B cell (primary cell): ENCODE measurements at regions of chr12 and their contacts with region 1.

Region 1: DNA sequence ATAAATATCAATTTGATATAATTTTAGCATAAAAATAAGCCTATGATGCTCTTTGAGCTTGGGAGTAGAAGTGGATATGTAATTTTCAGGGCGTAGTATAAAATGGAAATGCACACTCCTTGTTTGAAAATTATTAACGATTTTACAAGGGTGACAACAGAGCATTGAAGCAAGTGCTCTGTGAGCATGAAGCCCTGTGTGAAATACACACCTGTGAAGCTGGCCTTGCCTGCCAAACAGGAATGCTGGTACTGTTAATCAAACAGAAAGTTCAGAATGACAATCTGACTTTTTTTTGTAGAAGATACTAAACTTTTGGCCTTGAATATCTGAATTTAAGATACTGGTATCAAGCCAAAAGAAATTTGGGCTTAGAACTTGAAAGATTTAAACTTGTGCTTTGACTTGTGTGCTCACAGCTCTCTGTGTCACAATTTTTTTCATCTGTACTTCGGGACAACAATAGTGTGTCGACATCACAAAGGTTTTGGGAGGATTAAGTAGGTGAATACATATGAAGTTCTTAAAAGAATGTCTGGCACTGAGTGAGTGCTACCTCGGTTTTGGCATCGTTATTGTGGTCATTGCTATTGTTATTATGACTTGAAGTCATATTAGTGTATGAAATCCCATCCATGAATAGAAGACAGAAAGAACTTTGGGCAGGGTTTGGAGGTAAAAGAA is 47.3 kb downstream of the LRRK2 start:
- DNase-seq: no peak
- ATAC-seq: no peak
- H3K4me3 ChIP-seq: no peak overlapping the region
- H3K4me3 Mint-ChIP-seq: no peak overlapping the region
- H3K27ac ChIP-seq: no peak overlapping the region
- H3K27ac Mint-ChIP-seq: no peak overlapping the region
- H3K4me1 ChIP-seq: no peaks in the 10 kb centered on the region
- H3K4me1 Mint-ChIP-seq: peaks cover 2% of the 10 kb centered on the region
- H3K27me3 ChIP-seq: no peaks in the 10 kb centered on the region
- H3K27me3 Mint-ChIP-seq: no peaks in the 10 kb centered on the region
- CTCF ChIP-seq: no peak

Region 2: GRCh38 chr12:40248585-40249297 is 23.4 kb before region 1 on chr12:
- CTCF ChIA-PET with region 1: no interaction called
- POLR2A ChIA-PET with region 1: no interaction called
- intact Hi-C with region 1: no loop called
- DNase-seq: peak; percentile 40
- ATAC-seq: peak; percentile 54
- H3K4me3 ChIP-seq: peak overlapping the region in 1 of 5 experiments; percentile 21
- H3K4me3 Mint-ChIP-seq: peak overlapping the region; percentile 62
- H3K27ac ChIP-seq: peak overlapping the region; percentile 34 to 67
- H3K27ac Mint-ChIP-seq: peak overlapping the region; percentile 85
- H3K4me1 ChIP-seq: peaks cover 9 to 17% of the 10 kb centered on the region in 2 donors
- H3K4me1 Mint-ChIP-seq: peaks cover 27% of the 10 kb centered on the region
- H3K27me3 ChIP-seq: no peaks in the 10 kb centered on the region
- H3K27me3 Mint-ChIP-seq: no peaks in the 10 kb centered on the region
- CTCF ChIP-seq: no peak

Region 3: DNA sequence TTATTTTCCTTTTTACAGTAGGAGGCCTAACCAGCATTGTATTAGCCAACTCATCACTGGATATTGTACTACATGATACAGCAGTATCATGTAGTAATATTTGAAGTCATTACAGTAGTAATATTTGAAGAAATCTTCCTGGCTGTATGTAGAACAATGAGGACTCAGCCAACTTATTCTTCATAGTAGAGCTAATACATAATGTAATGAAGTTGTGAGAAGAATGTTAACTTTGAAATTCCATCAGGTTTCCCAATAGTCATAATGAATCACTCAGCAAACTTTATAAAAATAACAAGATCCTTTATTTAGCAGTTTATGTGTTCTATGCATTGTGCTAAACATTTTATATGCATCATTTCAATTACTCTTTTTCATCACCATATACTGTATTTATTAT is 14.5 kb after region 1 on chr12:
- CTCF ChIA-PET with region 1: interaction called, 3 read pairs
- POLR2A ChIA-PET with region 1: no interaction called
- intact Hi-C with region 1: loop called (anchors 2 kb)
- DNase-seq: no peak
- ATAC-seq: no peak
- H3K4me3 ChIP-seq: no peak overlapping the region
- H3K4me3 Mint-ChIP-seq: no peak overlapping the region
- H3K27ac ChIP-seq: no peak overlapping the region
- H3K27ac Mint-ChIP-seq: no peak overlapping the region
- H3K4me1 ChIP-seq: no peaks in the 10 kb centered on the region
- H3K4me1 Mint-ChIP-seq: peaks cover 4% of the 10 kb centered on the region
- H3K27me3 ChIP-seq: no peaks in the 10 kb centered on the region
- H3K27me3 Mint-ChIP-seq: no peaks in the 10 kb centered on the region
- CTCF ChIP-seq: no peak